MCF 10A (cell line): ENCODE measurements at regions of chr1 and their contacts with region 1.

Region 1: GRCh38 chr1:37999430-38000232 is 5.7 kb downstream of the FHL3 start:
- DNase-seq: peak; percentile 30
- H3K4me3 Mint-ChIP-seq: peak overlapping the region; percentile 33
- H3K27ac Mint-ChIP-seq: peak overlapping the region; percentile 88
- H3K4me1 Mint-ChIP-seq: peaks cover 42% of the 10 kb centered on the region
- H3K27me3 Mint-ChIP-seq: no peaks in the 10 kb centered on the region
- CTCF ChIP-seq: no peak

Region 2: GRCh38 chr1:38012363-38013226 is 13.0 kb after region 1 on chr1 and contains the start of gene UTP11:
- CTCF ChIA-PET with region 1: interaction called, 8 read pairs
- POLR2A ChIA-PET with region 1: interaction called, 32 read pairs
- intact Hi-C with region 1: no loop called
- DNase-seq: peak; percentile 100
- H3K4me3 Mint-ChIP-seq: peak within 1 kb of the TSS; percentile 97
- H3K27ac Mint-ChIP-seq: peak within 1 kb of the TSS; percentile 99
- H3K4me1 Mint-ChIP-seq: peaks cover 20% of the 10 kb centered on the region
- H3K27me3 Mint-ChIP-seq: no peaks in the 10 kb centered on the region
- CTCF ChIP-seq: no peak
- total RNA-seq, gene UTP11: 66.5 and 70.3 TPM in 2 replicates